ENCODE measurements at regions of chr11 and their contacts with region 1.

Region 1: GRCh38 chr11:126592496-126593410 is 237.3 kb downstream of the ST3GAL4 start:
- DNase-seq: no peak
- CTCF ChIP-seq: no peak

Region 2: GRCh38 chr11:126581871-126582648 is 10.7 kb before region 1 on chr11:
- CTCF ChIA-PET with region 1: no interaction called
- POLR2A ChIA-PET with region 1: no interaction called
- DNase-seq: no peak
- CTCF ChIP-seq: no peak

Region 3: DNA sequence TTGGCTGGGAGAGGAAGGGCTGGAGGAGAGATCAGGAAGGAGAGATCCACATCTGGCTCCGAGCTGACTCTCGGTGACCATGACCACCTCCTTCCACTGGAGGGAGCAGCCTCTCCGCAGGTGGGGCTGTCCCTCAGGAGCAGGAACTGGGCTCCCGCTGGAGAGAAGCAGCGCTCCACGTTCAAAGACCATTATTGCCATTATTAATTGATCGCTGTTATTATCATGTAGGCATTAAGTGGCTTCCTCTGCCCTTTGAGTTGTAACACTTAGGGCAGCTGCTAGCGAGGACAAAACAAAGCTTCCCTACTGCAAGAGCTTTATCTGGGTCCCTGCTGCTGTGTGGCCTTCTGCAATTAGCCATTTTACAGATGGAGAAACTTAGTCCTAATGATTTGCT is 14.6 kb after region 1 on chr11:
- CTCF ChIA-PET with region 1: interaction called, 11 read pairs
- POLR2A ChIA-PET with region 1: no interaction called
- DNase-seq: peak; percentile 53
- CTCF ChIP-seq: peak; percentile 51